Naive thymus-derived CD4-positive, alpha-beta T cell (primary cell): ENCODE measurements at regions of chr5 and their contacts with region 1.

Region 1: DNA sequence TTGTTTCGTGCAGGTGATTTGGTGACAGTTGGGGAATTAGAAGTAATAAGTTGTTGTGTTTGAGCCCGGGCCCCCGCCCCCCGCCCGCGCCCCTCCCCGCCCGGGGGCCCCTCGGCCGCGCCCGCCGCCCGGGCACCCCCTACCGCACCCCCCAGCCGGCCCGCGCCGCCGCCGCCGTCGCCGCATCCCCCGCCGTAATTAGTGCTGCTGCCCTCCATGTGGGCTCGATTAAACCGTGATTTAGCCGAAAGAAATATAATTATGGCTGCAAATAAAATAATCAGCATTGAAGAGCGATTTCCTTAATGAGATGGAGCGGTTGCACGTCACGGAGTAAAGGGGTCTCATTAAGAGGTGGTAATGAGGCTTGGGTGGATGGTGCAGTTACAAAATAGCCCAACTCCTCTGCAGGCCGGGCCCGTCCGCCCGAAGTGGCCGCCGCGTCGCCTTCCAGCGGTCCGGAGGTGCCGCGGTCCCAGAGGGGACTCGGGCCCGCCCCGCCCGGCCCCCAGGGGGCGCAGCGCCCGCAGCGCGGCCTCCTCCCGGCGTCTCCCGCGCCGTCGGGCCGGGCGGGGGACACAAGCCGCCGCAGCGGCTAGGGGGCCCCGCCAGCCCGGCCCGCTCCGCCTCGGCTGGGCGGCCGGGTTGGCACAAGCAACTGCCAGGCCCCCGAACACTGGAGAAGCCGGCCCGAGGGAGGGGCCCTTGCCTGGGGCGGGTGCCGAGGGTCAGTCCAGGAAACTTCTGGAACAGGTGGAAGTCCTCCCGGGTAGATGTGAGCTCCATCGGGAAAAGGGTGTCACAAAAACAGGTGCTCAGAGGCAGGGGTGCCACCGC is 6.9 kb upstream of the OTP start:
- DNase-seq: peak in 2 of 9 donors; percentile 51 to 66
- ATAC-seq: peak; percentile 83
- H3K4me3 ChIP-seq: no peak overlapping the region
- H3K4me3 Mint-ChIP-seq: peak overlapping the region; percentile 45 to 83 (median 72)
- H3K27ac ChIP-seq: no peak overlapping the region
- H3K27ac Mint-ChIP-seq: peak overlapping the region in 1 of 9 donors; percentile 12
- H3K4me1 ChIP-seq: peaks cover 7 to 9% of the 10 kb centered on the region in 2 donors
- H3K4me1 Mint-ChIP-seq: peaks cover 13 to 29% (median 19%) of the 10 kb centered on the region in 7 donors
- H3K27me3 ChIP-seq: peaks cover 17 to 43% of the 10 kb centered on the region in 2 donors
- H3K27me3 Mint-ChIP-seq: peaks cover 92 to 95% (median 94%) of the 10 kb centered on the region in 5 donors

Region 2: GRCh38 chr5:77630258-77631089 is 14.9 kb before region 1 on chr5:
- CTCF ChIA-PET with region 1: no interaction called
- POLR2A ChIA-PET with region 1: no interaction called
- intact Hi-C with region 1: loop called (anchors 2 kb)
- DNase-seq: peak in 2 of 9 donors; percentile 22 to 46
- ATAC-seq: peak; percentile 76
- H3K4me3 ChIP-seq: peak overlapping the region; percentile 19
- H3K4me3 Mint-ChIP-seq: peak overlapping the region; percentile 63 to 86 (median 80)
- H3K27ac ChIP-seq: no peak overlapping the region
- H3K27ac Mint-ChIP-seq: peak overlapping the region in 3 of 9 donors; percentile 3 to 73 (median 21)
- H3K4me1 ChIP-seq: peaks cover 0 to 8% of the 10 kb centered on the region in 2 donors
- H3K4me1 Mint-ChIP-seq: peaks cover 16 to 33% (median 25%) of the 10 kb centered on the region in 7 donors
- H3K27me3 ChIP-seq: peaks cover 22 to 73% of the 10 kb centered on the region in 2 donors
- H3K27me3 Mint-ChIP-seq: peaks cover 66 to 84% (median 74%) of the 10 kb centered on the region in 5 donors

Region 3: GRCh38 chr5:77972469-77973252 is 327.3 kb after region 1 on chr5:
- CTCF ChIA-PET with region 1: no interaction called
- POLR2A ChIA-PET with region 1: no interaction called
- intact Hi-C with region 1: loop called in 1 of 2 experiments (anchors 5 kb)
- DNase-seq: peak in 2 of 9 donors; percentile 3 to 15
- ATAC-seq: peak; percentile 54
- H3K4me3 ChIP-seq: peak overlapping the region; percentile 31
- H3K4me3 Mint-ChIP-seq: peak overlapping the region; percentile 56 to 86 (median 78)
- H3K27ac ChIP-seq: no peak overlapping the region
- H3K27ac Mint-ChIP-seq: no peak overlapping the region
- H3K4me1 ChIP-seq: peaks cover 6% of the 10 kb centered on the region in 2 donors
- H3K4me1 Mint-ChIP-seq: peaks cover 9 to 20% (median 13%) of the 10 kb centered on the region in 7 donors
- H3K27me3 ChIP-seq: peaks cover 0 to 6% of the 10 kb centered on the region in 2 donors
- H3K27me3 Mint-ChIP-seq: peaks cover 51 to 82% (median 75%) of the 10 kb centered on the region in 5 donors

Region 4: DNA sequence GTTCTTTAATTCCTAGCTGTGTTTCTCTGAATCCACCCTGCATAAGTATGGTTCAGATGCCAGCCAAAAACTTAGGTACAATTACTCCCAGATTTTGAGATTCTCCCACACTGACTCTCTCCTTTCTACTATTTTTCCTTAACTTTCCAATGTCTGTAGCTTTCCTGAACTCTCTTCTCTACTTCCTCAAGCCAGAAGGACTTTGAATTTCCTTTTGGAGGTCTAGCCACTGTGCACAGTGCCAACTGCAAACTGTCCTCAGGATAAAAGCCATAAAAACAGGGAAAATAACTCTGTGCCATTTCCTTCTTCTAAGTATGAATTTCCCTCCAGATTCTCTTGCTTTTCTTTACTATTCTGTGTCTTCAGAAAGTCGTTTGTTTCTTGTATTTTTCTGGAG is 491.9 kb after region 1 on chr5:
- CTCF ChIA-PET with region 1: no interaction called
- POLR2A ChIA-PET with region 1: no interaction called
- intact Hi-C with region 1: no loop called
- DNase-seq: no peak
- ATAC-seq: no peak
- H3K4me3 ChIP-seq: no peak overlapping the region
- H3K4me3 Mint-ChIP-seq: no peak overlapping the region
- H3K27ac ChIP-seq: no peak overlapping the region
- H3K27ac Mint-ChIP-seq: peak overlapping the region in 1 of 9 donors; percentile 4
- H3K4me1 ChIP-seq: no peaks in the 10 kb centered on the region
- H3K4me1 Mint-ChIP-seq: peaks cover 0 to 6% (median 4%) of the 10 kb centered on the region in 7 donors
- H3K27me3 ChIP-seq: no peaks in the 10 kb centered on the region
- H3K27me3 Mint-ChIP-seq: no peaks in the 10 kb centered on the region

Region 5: GRCh38 chr5:78269088-78269703 is 623.8 kb after region 1 on chr5:
- CTCF ChIA-PET with region 1: no interaction called
- POLR2A ChIA-PET with region 1: no interaction called
- intact Hi-C with region 1: loop called (anchors 5 kb)
- DNase-seq: peak in 4 of 9 donors; percentile 15 to 26 (median 19)
- ATAC-seq: peak; percentile 76
- H3K4me3 ChIP-seq: no peak overlapping the region
- H3K4me3 Mint-ChIP-seq: no peak overlapping the region
- H3K27ac ChIP-seq: no peak overlapping the region
- H3K27ac Mint-ChIP-seq: no peak overlapping the region
- H3K4me1 ChIP-seq: no peaks in the 10 kb centered on the region
- H3K4me1 Mint-ChIP-seq: peaks cover 9 to 36% (median 31%) of the 10 kb centered on the region in 7 donors
- H3K27me3 ChIP-seq: no peaks in the 10 kb centered on the region
- H3K27me3 Mint-ChIP-seq: no peaks in the 10 kb centered on the region